ENCODE measurements at regions of chr7 and their contacts with region 1.

Region 1: GRCh38 chr7:100852048-100852872 is at the start of gene SLC12A9:
- DNase-seq: peak; percentile 85
- ATAC-seq: peak; percentile 98
- H3K4me3 ChIP-seq: peak within 1 kb of the TSS; percentile 96
- H3K27ac ChIP-seq: peak within 1 kb of the TSS; percentile 79
- H3K4me1 ChIP-seq: peaks cover 12% of the 10 kb centered on the region; the same call in 1 of the 2 replicates
- H3K27me3 ChIP-seq: no peaks in the 10 kb centered on the region
- CTCF ChIP-seq: peak; percentile 91
- total RNA-seq, gene SLC12A9: 25.9 and 31.2 TPM in 2 replicates

Region 2: DNA sequence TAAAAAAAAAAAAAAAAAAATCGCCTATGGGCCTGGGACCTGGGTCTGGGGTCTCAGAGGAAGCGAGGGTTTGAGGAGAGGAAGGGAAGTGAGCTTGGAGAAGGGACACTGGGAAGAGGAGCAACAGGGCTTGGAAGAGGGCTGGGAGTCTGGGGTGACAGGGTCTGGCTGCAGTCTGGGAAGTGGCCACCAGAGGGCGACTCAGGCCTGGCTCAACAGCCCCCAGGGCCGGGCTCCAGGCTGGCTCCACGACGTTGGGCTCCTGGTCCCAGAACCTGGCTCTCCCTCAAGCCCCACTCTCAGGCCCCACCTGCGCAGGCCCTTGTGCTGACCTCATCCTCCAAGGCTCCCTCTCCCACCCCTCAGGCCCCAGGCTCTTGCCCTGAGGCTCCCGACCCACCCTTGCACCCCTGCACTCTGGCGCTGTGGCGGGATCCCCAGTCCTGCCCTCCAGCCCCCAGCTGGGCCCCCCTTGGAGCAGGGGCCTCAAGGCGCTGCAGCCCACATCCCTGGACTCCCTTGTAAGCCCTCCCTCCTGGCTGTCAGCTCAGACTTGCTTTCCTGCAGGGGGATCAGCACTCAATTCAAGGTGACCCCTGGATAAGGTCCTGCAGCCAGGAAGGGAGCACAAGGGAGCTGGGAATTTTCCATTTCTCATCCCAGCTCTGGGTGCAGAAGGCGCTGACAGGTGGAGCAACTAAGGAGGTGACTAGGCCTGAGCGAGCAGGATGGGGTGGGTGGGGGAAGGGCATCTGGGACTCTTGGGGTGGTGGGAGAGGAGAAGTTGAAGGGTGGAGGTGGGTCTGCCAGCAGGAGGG is 382.8 kb before region 1 on chr7:
- CTCF ChIA-PET with region 1: interaction called, 5 read pairs
- POLR2A ChIA-PET with region 1: no interaction called
- intact Hi-C with region 1: loop called (anchors 10 kb)
- DNase-seq: peak; percentile 79
- ATAC-seq: peak; percentile 76
- H3K4me3 ChIP-seq: no peak overlapping the region
- H3K27ac ChIP-seq: no peak overlapping the region
- H3K4me1 ChIP-seq: no peaks in the 10 kb centered on the region
- H3K27me3 ChIP-seq: no peaks in the 10 kb centered on the region
- CTCF ChIP-seq: peak; percentile 80

Region 3: GRCh38 chr7:100719523-100720319 is 132.5 kb before region 1 on chr7:
- CTCF ChIA-PET with region 1: interaction called, 21 read pairs
- POLR2A ChIA-PET with region 1: no interaction called
- intact Hi-C with region 1: no loop called
- DNase-seq: peak; percentile 16
- ATAC-seq: peak; percentile 45; the same call in 1 of the 2 replicates
- H3K4me3 ChIP-seq: no peak overlapping the region
- H3K27ac ChIP-seq: no peak overlapping the region
- H3K4me1 ChIP-seq: no peaks in the 10 kb centered on the region
- H3K27me3 ChIP-seq: no peaks in the 10 kb centered on the region
- CTCF ChIP-seq: peak; percentile 32

Region 4: DNA sequence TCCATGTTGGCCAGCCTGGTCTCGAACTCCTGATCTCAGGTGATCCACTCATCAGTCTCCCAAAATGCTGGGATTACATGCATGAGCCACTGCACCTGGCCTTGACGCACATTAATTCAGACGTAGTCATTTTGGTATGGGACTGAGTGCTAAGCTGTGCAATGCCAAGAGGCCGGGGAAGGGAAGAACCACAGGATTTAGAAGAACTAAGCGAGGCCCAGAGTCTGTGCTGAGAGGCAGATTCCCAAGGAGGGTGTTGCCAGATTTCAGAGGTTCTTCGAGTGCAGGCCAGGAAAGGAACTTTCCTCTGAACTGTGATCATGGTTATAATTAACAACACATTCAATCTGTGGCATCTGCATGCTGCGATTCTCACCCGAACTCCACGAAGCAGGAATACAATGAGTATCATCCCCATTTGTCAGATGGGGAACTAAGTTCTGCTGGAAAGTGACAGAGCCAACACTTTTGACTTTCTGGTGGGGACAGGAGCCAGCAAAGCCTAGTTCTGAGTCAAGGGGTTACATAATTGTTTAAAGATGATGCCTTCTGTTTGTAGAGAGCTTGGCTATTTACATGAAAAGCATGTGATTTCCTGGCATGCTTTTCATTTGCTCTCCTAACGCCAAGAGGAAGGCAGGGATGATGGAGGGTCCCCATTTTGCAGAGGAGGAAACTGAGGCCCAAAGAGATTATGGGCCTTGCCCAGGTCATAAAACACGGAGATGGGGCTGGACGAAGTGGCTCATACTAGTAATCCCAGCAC is 125.1 kb before region 1 on chr7:
- CTCF ChIA-PET with region 1: interaction called, 21 read pairs
- POLR2A ChIA-PET with region 1: no interaction called
- intact Hi-C with region 1: loop called (anchors 5 kb)
- DNase-seq: peak; percentile 41
- ATAC-seq: 0 out of 2 replicates have a peak, but pooled peaks have one; percentile 14
- H3K4me3 ChIP-seq: no peak overlapping the region
- H3K27ac ChIP-seq: no peak overlapping the region
- H3K4me1 ChIP-seq: peaks cover 13% of the 10 kb centered on the region
- H3K27me3 ChIP-seq: no peaks in the 10 kb centered on the region
- CTCF ChIP-seq: no peak

Region 5: GRCh38 chr7:100803398-100804233 is 48.6 kb before region 1 on chr7:
- CTCF ChIA-PET with region 1: interaction called, 6 read pairs
- POLR2A ChIA-PET with region 1: interaction called, 4 read pairs
- intact Hi-C with region 1: loop called (anchors 1 kb)
- DNase-seq: peak; percentile 87
- ATAC-seq: peak; percentile 57
- H3K4me3 ChIP-seq: peak overlapping the region; percentile 34; the same call in 1 of the 2 replicates
- H3K27ac ChIP-seq: peak overlapping the region; percentile 96
- H3K4me1 ChIP-seq: peaks cover 46% of the 10 kb centered on the region
- H3K27me3 ChIP-seq: no peaks in the 10 kb centered on the region
- CTCF ChIP-seq: no peak

Region 6: GRCh38 chr7:100827330-100828227 is 24.7 kb before region 1 on chr7 and contains the start of gene EPHB4:
- CTCF ChIA-PET with region 1: interaction called, 14 read pairs
- POLR2A ChIA-PET with region 1: interaction called, 8 read pairs
- intact Hi-C with region 1: loop called (anchors 1 kb)
- DNase-seq: peak; percentile 84
- ATAC-seq: peak; percentile 79
- H3K4me3 ChIP-seq: peak within 1 kb of the TSS; percentile 99
- H3K27ac ChIP-seq: peak within 1 kb of the TSS; percentile 5; the same call in 1 of the 2 replicates
- H3K4me1 ChIP-seq: peaks cover 5% of the 10 kb centered on the region; the same call in 1 of the 2 replicates
- H3K27me3 ChIP-seq: no peaks in the 10 kb centered on the region
- CTCF ChIP-seq: peak; percentile 62
- total RNA-seq, gene EPHB4: 104 and 150 TPM in 2 replicates

Region 7: DNA sequence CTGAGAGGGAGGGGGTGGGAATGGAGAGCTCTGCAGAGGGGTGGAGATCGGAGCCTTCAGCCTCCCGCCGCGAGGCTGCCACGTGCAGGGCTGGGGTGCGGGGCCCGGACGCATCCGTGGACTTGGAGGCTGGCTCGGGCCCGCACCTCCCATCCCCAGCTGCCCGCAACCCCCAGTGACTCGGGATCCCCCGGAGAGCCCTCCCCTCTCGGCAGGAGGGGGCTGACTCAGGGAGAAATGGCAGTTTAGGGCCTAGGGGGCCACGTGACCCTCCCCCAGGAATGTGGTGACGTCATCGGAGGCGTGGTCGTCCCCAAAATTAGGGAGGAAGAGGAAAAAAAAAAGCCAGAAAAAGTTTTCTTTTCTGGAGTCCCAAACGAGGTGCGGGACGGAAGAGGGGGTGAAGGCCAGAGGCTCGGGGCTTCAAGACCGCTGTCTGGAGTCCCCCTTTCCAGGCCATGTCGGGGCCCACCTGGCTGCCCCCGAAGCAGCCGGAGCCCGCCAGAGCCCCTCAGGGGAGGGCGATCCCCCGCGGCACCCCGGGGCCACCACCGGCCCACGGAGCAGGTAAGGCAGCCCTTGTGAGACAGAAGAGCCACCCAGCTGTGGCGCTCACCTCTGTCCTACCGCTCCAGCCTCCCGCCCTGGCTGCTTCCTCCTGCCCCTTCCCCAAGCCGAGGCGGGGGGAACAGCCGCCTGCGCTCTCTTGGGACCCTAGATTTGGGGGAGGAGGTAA is 14.9 kb after region 1 on chr7 and contains the start of gene TRIP6:
- CTCF ChIA-PET with region 1: no interaction called
- POLR2A ChIA-PET with region 1: no interaction called
- intact Hi-C with region 1: loop called (anchors 1 kb)
- DNase-seq: peak; percentile 74
- ATAC-seq: peak; percentile 5
- H3K4me3 ChIP-seq: peak within 1 kb of the TSS; percentile 31
- H3K27ac ChIP-seq: peak within 1 kb of the TSS; percentile 100
- H3K4me1 ChIP-seq: peaks cover 34% of the 10 kb centered on the region
- H3K27me3 ChIP-seq: no peaks in the 10 kb centered on the region
- CTCF ChIP-seq: no peak
- total RNA-seq, gene TRIP6: 11.3 and 14.6 TPM in 2 replicates

Region 8: GRCh38 chr7:101066141-101066832 is 214.0 kb after region 1 on chr7:
- CTCF ChIA-PET with region 1: no interaction called
- POLR2A ChIA-PET with region 1: no interaction called
- intact Hi-C with region 1: no loop called
- DNase-seq: no peak
- ATAC-seq: no peak
- H3K4me3 ChIP-seq: no peak overlapping the region
- H3K27ac ChIP-seq: no peak overlapping the region
- H3K4me1 ChIP-seq: no peaks in the 10 kb centered on the region
- H3K27me3 ChIP-seq: no peaks in the 10 kb centered on the region
- CTCF ChIP-seq: no peak

Measured in PC-3 (cell line).